Testis (tissue), 5 donors: ENCODE measurements at regions of chr2 and their contacts with region 1.

Region 1: DNA sequence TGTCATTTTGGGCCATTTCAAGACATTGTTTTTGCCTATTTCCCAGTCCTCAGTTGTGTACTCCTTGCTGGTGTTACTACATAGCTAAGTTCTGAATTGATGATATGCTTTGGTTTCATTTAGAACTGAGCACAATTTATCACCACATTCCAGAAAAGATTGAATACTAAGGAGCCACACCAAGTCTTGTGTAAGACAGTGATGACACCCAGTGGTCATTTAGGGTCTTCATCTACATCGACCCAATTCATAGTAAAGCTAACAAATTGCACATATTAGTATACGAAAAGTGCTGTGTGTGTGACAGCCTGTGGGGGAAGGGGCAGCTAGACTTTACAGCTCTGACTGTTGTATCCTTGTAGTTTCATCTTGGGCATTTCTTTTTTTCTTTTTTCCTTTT is 10.9 kb upstream of the DLX2 start:
- DNase-seq: no peak
- H3K4me3 ChIP-seq: no peak overlapping the region
- H3K27ac ChIP-seq: no peak overlapping the region
- H3K4me1 ChIP-seq: no peaks in the 10 kb centered on the region
- H3K27me3 ChIP-seq: no peaks in the 10 kb centered on the region
- CTCF ChIP-seq: peak in 1 of 3 experiments; percentile 41
- POLR2A ChIP-seq: no peak

Region 2: GRCh38 chr2:171574149-171574795 is 539.3 kb before region 1 on chr2:
- intact Hi-C with region 1: loop called (anchors 10 kb)
- DNase-seq: peak; percentile 91
- H3K4me3 ChIP-seq: peak overlapping the region in 1 of 2 donors; percentile 13
- H3K27ac ChIP-seq: no peak overlapping the region
- H3K4me1 ChIP-seq: no peaks in the 10 kb centered on the region
- H3K27me3 ChIP-seq: no peaks in the 10 kb centered on the region
- CTCF ChIP-seq: peak; percentile 91 to 98 (median 94)
- POLR2A ChIP-seq: no peak

Region 3: GRCh38 chr2:171922230-171923022 is 191.2 kb before region 1 on chr2 and contains the start of gene HAT1:
- intact Hi-C with region 1: no loop called
- DNase-seq: peak; percentile 99
- H3K4me3 ChIP-seq: peak within 1 kb of the TSS; percentile 76 to 84
- H3K27ac ChIP-seq: peak within 1 kb of the TSS; percentile 94 to 95
- H3K4me1 ChIP-seq: peaks cover 10% of the 10 kb centered on the region
- H3K27me3 ChIP-seq: no peaks in the 10 kb centered on the region
- CTCF ChIP-seq: no peak
- POLR2A ChIP-seq: no peak
- total RNA-seq, gene HAT1: 34.5 to 46.3 TPM